HEK293 (cell line): ENCODE measurements at regions of chr12 and their contacts with region 1.

Region 1: GRCh38 chr12:122871851-122872780 is 23.8 kb downstream of the VPS37B start:
- H3K4me3 ChIP-seq: no peak overlapping the region
- H3K27ac ChIP-seq: no peak overlapping the region
- H3K4me1 ChIP-seq: peaks cover 25% of the 10 kb centered on the region
- CTCF ChIP-seq: no peak

Region 2: GRCh38 chr12:122909442-122910288 is 37.5 kb after region 1 on chr12:
- CTCF ChIA-PET with region 1: no interaction called
- POLR2A ChIA-PET with region 1: no interaction called
- H3K4me3 ChIP-seq: no peak overlapping the region
- H3K27ac ChIP-seq: no peak overlapping the region
- H3K4me1 ChIP-seq: no peaks in the 10 kb centered on the region
- CTCF ChIP-seq: no peak

Region 3: GRCh38 chr12:122951979-122952892 is 80.1 kb after region 1 on chr12:
- CTCF ChIA-PET with region 1: interaction called, 10 read pairs
- POLR2A ChIA-PET with region 1: no interaction called
- H3K4me3 ChIP-seq: no peak overlapping the region
- H3K27ac ChIP-seq: no peak overlapping the region
- H3K4me1 ChIP-seq: no peaks in the 10 kb centered on the region
- CTCF ChIP-seq: peak; percentile 90